ENCODE measurements at regions of chr14 and their contacts with region 1.

Region 1: GRCh38 chr14:60195179-60195810 is 30.1 kb upstream of the DHRS7 start:
- DNase-seq: peak in 1 of 2 donors; percentile 34
- ATAC-seq: peak in 2 of 3 donors; percentile 42 to 48
- H3K4me3 ChIP-seq: no peak overlapping the region
- H3K4me3 Mint-ChIP-seq: no peak overlapping the region
- H3K27ac ChIP-seq: no peak overlapping the region
- H3K27ac Mint-ChIP-seq: no peak overlapping the region
- H3K4me1 ChIP-seq: no peaks in the 10 kb centered on the region
- H3K4me1 Mint-ChIP-seq: no peaks in the 10 kb centered on the region
- H3K27me3 ChIP-seq: no peaks in the 10 kb centered on the region
- H3K27me3 Mint-ChIP-seq: peaks cover 7 to 29% of the 10 kb centered on the region in 2 donors
- CTCF ChIP-seq: no peak

Region 2: DNA sequence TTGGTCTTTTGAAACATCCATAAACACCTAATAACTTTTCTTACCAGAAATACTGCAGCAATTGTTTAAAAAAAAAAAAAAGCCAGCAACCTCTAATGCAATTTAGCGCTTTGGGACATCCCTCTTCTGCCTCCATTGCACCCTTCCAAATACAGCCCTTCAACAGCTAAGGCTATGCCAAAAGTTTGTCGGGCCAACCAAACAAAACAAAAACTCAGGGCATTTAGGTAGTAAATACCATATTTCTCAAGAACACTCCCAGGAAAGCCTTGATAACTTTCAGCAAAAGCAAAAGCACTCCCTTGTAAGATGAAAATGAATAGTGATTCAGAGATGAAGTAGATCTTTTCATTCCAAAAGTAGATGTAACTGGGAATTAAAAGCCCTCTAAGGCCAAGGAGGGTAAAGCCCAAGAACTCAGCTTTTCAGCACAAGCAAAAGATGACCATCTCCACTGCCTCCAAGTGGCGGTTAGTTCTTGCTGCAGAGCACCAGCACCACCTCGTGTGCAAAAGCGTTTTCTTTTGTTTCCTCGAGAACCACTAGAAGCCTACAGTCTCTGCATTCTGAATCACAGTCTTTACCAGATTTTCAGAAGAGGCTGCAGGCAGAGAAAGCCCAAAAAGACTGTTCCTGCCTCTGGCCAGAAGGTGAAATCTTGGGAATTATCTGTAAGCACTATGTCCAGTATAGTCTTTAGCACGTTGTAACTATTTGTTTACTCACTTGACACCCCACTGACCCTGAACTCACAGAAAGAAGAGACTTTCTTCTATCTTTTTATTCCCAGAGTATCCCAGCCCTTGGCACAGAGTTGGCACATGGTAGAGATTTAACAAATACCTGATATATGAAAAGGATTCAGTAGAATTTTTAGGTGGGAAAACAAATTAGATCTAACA is 366.8 kb after region 1 on chr14:
- intact Hi-C with region 1: loop called (anchors 5 kb)
- DNase-seq: peak in 1 of 2 donors; percentile 37
- ATAC-seq: no peak
- H3K4me3 ChIP-seq: no peak overlapping the region
- H3K4me3 Mint-ChIP-seq: no peak overlapping the region
- H3K27ac ChIP-seq: no peak overlapping the region
- H3K27ac Mint-ChIP-seq: no peak overlapping the region
- H3K4me1 ChIP-seq: no peaks in the 10 kb centered on the region
- H3K4me1 Mint-ChIP-seq: no peaks in the 10 kb centered on the region
- H3K27me3 ChIP-seq: no peaks in the 10 kb centered on the region
- H3K27me3 Mint-ChIP-seq: peaks cover 5 to 7% of the 10 kb centered on the region in 2 donors
- CTCF ChIP-seq: no peak